ENCODE measurements at regions of chr1 and their contacts with region 1.

Region 1: DNA sequence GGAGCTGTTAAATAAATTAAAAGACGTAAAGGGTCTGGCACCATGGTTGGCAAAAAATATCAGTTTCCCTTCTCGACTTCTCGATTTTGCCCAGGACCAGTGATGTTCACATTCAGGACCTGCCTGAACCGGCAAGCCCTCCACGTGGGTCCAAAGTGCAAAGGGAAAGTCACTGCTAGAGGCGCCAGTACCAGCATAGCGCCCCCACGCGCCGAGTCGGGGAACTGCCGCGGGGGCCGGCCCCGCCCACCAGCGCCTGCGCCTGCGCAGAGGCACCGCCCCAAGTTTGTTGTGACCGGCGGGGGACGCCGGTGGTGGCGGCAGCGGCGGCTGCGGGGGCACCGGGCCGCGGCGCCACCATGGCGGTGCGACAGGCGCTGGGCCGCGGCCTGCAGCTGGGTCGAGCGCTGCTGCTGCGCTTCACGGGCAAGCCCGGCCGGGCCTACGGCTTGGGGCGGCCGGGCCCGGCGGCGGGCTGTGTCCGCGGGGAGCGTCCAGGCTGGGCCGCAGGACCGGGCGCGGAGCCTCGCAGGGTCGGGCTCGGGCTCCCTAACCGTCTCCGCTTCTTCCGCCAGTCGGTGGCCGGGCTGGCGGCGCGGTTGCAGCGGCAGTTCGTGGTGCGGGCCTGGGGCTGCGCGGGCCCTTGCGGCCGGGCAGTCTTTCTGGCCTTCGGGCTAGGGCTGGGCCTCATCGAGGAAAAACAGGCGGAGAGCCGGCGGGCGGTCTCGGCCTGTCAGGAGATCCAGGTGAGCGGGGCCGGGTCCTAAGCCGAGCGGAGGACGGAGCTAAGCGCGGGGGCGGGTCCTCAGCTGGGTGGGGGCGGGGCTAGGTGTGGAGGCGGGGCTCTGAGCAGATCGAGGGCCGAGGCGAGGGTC is at the start of gene PINK1:
- DNase-seq: peak; percentile 90
- ATAC-seq: peak; percentile 89
- H3K4me3 Mint-ChIP-seq: peak within 1 kb of the TSS; percentile 93
- H3K27ac Mint-ChIP-seq: peak within 1 kb of the TSS; percentile 98
- H3K4me1 Mint-ChIP-seq: peaks cover 13% of the 10 kb centered on the region
- H3K27me3 Mint-ChIP-seq: peaks cover 15% of the 10 kb centered on the region
- CTCF ChIP-seq: peak; percentile 99
- total RNA-seq, gene PINK1: 34.7 to 47.7 TPM (median 35.1 TPM) in 3 replicates

Region 2: DNA sequence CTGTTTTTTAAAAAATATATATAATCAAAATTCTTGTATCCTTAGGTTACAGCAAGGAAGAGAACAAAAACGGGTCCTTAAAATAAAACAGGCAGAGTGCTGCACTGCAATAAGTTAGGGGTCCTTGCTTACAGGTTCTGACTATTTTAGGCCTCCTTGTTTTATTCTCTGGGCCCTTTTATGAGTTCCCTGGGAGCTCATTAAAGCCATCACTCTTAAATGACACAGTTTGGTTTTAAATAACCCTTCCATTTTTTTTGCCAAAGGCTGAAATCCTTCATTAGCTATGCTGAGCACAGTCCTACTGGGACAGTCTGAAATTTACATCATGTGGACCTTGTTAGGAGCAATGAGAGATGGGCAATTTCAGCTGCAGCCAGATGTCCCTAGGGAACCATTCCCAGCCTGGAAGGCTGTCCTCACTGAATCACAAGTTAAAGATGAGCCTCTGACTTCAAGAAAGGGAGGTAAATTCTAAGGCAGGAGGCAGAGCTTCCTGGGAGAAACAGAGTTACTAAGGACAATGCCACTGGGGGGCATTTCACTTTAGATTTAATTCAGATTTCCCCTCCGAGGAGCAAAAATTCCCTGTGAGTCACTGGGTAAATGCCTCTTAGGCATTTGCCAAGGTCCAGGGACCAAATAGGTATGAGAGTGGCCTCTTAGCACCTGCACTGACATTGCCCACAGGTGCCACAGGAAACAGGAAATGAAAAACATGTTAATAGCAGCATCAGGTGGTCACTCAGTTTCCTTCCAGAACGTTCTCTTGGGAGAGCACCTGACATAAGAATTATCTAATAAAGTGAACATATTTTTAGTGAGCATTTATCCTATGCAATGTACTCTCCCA is 121.7 kb before region 1 on chr1:
- CTCF ChIA-PET with region 1: no interaction called
- POLR2A ChIA-PET with region 1: no interaction called
- DNase-seq: no peak
- ATAC-seq: no peak
- H3K4me3 Mint-ChIP-seq: no peak overlapping the region
- H3K27ac Mint-ChIP-seq: no peak overlapping the region
- H3K4me1 Mint-ChIP-seq: peaks cover 4% of the 10 kb centered on the region; the same call in 1 of the 2 replicates
- H3K27me3 Mint-ChIP-seq: peaks cover 50% of the 10 kb centered on the region
- CTCF ChIP-seq: no peak

Region 3: GRCh38 chr1:20521960-20522861 is 111.2 kb before region 1 on chr1:
- CTCF ChIA-PET with region 1: interaction called, 11 read pairs
- POLR2A ChIA-PET with region 1: no interaction called
- DNase-seq: peak; percentile 90
- ATAC-seq: peak; percentile 91
- H3K4me3 Mint-ChIP-seq: peak overlapping the region; percentile 57
- H3K27ac Mint-ChIP-seq: no peak overlapping the region
- H3K4me1 Mint-ChIP-seq: 0 out of 2 replicates have a peak, but pooled peaks cover 4% of the 10 kb centered on the region
- H3K27me3 Mint-ChIP-seq: peaks cover 40% of the 10 kb centered on the region
- CTCF ChIP-seq: peak; percentile 75

Region 4: GRCh38 chr1:20589331-20590278 is 43.8 kb before region 1 on chr1:
- CTCF ChIA-PET with region 1: interaction called, 18 read pairs
- POLR2A ChIA-PET with region 1: no interaction called
- DNase-seq: no peak
- ATAC-seq: peak; percentile 16; the same call in 1 of the 2 replicates
- H3K4me3 Mint-ChIP-seq: peak overlapping the region; percentile 43
- H3K27ac Mint-ChIP-seq: peak overlapping the region; percentile 59; the same call in 1 of the 2 replicates
- H3K4me1 Mint-ChIP-seq: peaks cover 33% of the 10 kb centered on the region
- H3K27me3 Mint-ChIP-seq: peaks cover 2% of the 10 kb centered on the region; the same call in 1 of the 2 replicates
- CTCF ChIP-seq: no peak

Region 5: DNA sequence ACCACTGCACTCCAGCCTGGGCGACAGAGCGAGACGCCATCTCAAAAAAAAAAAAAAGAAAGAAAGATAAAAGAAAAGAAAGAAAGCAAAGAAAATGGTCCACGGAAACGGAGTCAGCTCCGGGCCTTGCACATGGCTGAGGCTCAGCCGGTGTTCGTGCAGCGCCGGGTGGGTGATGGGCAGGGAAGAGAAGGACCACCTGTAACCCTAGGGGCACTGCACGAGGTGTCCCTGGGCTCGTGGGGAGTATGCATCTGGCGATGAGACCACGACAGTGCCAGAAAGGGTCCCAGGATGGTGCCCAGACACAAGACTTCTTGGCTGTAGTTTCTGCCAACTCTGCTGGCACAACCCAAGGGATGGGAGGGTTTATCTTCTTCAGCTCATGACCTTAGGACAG is 38.7 kb before region 1 on chr1:
- CTCF ChIA-PET with region 1: interaction called, 18 read pairs
- POLR2A ChIA-PET with region 1: no interaction called
- DNase-seq: no peak
- ATAC-seq: no peak
- H3K4me3 Mint-ChIP-seq: no peak overlapping the region
- H3K27ac Mint-ChIP-seq: no peak overlapping the region
- H3K4me1 Mint-ChIP-seq: peaks cover 18% of the 10 kb centered on the region
- H3K27me3 Mint-ChIP-seq: no peaks in the 10 kb centered on the region; the same call in 1 of the 2 replicates
- CTCF ChIP-seq: no peak

Region 6: DNA sequence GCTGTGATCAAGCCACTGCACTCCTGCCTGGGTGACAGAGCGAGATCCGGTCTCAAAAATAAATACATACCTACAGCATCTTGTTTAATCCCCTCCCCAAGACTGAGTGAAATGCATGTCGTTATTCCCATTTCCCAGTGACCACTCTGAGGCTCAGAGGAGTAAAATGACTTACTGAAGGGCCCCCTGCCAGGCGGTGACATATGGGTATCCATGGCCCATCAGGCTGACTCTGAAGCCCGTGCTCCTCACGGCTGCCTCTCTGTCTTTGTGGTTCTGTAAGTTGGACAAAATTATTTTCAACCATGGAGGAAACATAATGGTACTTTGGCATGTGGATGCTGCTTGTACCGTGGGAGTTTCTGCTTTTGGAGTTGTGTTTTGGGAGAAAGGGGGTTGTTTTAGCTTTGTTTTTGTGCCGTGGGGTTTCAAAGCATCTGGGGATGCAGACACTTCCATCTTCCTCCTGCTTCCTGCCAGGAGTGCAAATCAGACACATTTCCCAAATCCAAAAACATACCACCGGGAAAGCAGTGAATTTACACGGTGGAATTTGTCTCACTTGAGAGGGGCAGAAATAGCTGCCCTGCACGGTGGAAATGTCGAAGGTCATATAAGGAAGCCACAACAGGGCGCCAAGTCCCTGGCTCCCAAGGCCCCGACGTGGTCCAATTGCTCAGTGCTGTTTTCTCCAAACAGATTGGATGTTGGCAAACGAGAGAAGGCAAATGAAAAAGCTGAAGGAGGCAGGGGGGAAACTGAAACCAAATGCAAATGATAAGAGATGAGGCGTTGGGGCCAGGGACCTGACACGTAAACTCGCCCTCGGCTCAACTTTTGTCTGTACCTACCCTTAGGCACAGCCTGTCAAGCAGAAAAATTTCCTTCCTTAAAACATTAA is 17.2 kb before region 1 on chr1:
- CTCF ChIA-PET with region 1: interaction called, 13 read pairs
- POLR2A ChIA-PET with region 1: interaction called, 3 read pairs
- DNase-seq: no peak
- ATAC-seq: peak; percentile 18; the same call in 1 of the 2 replicates
- H3K4me3 Mint-ChIP-seq: no peak overlapping the region
- H3K27ac Mint-ChIP-seq: peak overlapping the region; percentile 57; the same call in 1 of the 2 replicates
- H3K4me1 Mint-ChIP-seq: peaks cover 30% of the 10 kb centered on the region
- H3K27me3 Mint-ChIP-seq: no peaks in the 10 kb centered on the region
- CTCF ChIP-seq: no peak

Region 7: DNA sequence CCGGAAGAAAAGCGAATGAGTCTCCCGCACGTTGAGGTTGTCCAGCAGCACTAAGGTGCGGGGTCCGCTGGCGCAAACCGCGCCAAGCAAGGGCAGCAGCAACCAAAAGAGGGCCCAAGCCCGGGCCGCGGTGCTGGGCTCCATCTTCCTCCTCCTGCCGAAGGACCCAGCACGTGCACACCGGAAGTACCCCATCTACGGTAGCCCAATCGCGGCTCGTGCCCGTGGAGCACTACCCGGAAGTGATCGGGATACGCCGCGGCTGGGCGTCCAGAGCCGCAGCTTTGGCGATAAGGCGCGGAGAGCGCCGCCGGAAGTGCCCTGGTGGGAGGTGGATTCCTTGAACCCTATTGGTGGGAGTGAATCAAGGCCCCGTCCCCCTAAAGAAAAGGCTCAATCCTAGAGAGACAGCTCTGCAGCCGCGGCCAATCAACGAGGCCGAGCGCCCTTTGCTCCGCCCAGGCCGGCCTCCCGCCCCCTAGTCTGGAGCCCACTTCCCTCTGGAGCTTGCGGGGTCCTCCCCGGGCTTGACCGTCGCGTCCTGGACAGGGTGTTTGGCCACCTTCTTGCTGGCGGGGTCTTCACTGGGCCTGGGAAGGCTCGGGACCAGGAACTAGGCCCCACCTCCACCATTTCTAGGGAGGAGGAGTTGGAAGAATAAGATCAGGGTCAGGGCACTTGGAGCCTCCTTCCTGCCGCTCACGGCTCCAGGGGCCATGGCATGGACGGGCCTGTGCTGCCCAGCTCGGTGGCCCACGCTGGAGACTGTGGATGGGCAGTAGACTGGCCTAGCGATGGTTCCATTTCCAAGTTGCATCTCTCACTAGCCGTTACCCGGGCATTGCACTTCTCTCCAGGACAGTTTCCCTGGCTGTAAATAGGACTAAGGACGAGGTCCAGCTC is 28.0 kb after region 1 on chr1 and contains the start of gene DDOST:
- CTCF ChIA-PET with region 1: interaction called, 25 read pairs
- POLR2A ChIA-PET with region 1: interaction called, 4 read pairs
- DNase-seq: peak; percentile 96
- ATAC-seq: peak; percentile 98
- H3K4me3 Mint-ChIP-seq: peak within 1 kb of the TSS; percentile 99
- H3K27ac Mint-ChIP-seq: peak within 1 kb of the TSS; percentile 98
- H3K4me1 Mint-ChIP-seq: peaks cover 22% of the 10 kb centered on the region
- H3K27me3 Mint-ChIP-seq: no peaks in the 10 kb centered on the region
- CTCF ChIP-seq: no peak
- total RNA-seq, gene DDOST: 299 to 306 TPM (median 300 TPM) in 3 replicates

Measured in WTC11 (cell line).